Posterior cingulate gyrus (tissue), 11 donors: ENCODE measurements at regions of chr6 and their contacts with region 1.

Region 1: GRCh38 chr6:22399701-22400100 is 102.9 kb upstream of the PRL start:
- DNase-seq: no peak

Region 2: DNA sequence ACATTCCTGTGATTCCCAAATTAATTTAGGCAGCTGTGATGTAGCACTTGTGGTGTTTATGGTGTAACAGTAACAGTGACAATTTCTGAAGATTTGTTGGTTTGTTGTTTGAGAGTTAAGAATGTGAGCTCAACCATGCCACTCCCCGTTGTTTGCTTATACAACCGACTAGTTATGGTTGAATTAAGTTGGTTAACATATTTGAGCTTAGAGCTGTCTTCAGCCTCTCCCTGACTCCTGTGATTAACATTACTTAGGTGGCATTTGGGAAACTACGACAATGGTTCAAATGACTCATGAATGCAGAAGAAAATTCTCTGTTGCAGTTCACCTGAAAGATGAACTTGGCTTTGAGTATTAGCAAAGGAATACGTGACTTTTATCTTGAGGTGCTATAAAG is 67.0 kb before region 1 on chr6:
- intact Hi-C with region 1: loop called (anchors 10 kb)
- DNase-seq: no peak